Common myeloid progenitor, CD34-positive (primary cell): ENCODE measurements at regions of chr3 and their contacts with region 1.

Region 1: DNA sequence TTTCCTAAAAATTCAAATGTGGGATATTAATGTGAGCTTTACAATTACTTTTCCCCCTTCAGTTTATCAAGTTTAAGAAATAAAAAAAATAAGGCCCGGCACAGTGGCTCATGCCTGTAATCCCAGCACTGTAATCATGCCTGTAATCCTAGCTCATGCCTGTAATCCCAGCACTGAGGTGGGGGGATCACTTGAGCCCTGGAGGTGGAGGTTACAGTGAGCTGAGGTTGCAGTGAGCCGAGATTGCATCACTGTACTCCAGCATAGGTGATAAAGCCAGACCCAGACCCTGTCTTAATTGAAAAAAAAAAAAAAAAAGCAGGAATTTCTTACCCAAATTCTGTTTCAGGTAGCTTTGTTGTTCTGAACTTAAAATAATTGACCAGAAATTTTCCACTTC is 17.9 kb downstream of the ATP6V1A start:
- DNase-seq: no peak
- H3K4me3 ChIP-seq: no peak overlapping the region
- H3K27ac ChIP-seq: no peak overlapping the region
- H3K4me1 ChIP-seq: peaks cover 0 to 2% (median 0%) of the 10 kb centered on the region in 4 experiments
- H3K27me3 ChIP-seq: no peaks in the 10 kb centered on the region

Region 2: DNA sequence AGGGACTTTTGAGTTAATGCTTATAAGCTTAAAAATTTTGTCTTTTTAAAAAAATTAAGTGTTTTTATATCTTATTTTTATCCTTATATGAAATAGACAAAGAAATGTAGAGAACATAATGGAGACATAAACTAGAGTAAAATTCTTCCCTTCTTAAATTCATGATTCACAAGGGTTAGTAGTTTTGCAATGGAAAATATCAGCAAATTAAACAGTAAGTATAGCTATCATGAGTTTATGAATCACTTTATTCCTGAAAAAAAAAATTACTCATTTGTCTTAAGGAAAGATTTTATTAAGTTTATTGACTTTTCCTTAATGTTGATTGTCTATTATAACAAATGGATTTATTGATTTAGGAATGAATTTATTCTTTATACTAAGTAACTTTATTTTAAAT is 13.6 kb before region 1 on chr3:
- CTCF ChIA-PET with region 1: interaction called, 17 read pairs
- POLR2A ChIA-PET with region 1: no interaction called
- DNase-seq: no peak
- H3K4me3 ChIP-seq: no peak overlapping the region
- H3K27ac ChIP-seq: no peak overlapping the region
- H3K4me1 ChIP-seq: peaks cover 24 to 42% (median 31%) of the 10 kb centered on the region in 4 experiments
- H3K27me3 ChIP-seq: no peaks in the 10 kb centered on the region

Region 3: GRCh38 chr3:113795693-113796092 is 31.0 kb after region 1 on chr3:
- CTCF ChIA-PET with region 1: no interaction called
- POLR2A ChIA-PET with region 1: no interaction called
- DNase-seq: peak in 1 of 3 donors; percentile 9
- H3K4me3 ChIP-seq: no peak overlapping the region
- H3K27ac ChIP-seq: no peak overlapping the region
- H3K4me1 ChIP-seq: peaks cover 0 to 27% (median 3%) of the 10 kb centered on the region in 4 experiments
- H3K27me3 ChIP-seq: no peaks in the 10 kb centered on the region